Activated CD8-positive, alpha-beta T cell treated with anti-CD3 and anti-CD28 coated beads, Interleukin-2, amount 10 ng/mL, durations not matched to agents 7 days and 5 days (primary cell): ENCODE measurements at regions of chr22 and their contacts with region 1.

Region 1: DNA sequence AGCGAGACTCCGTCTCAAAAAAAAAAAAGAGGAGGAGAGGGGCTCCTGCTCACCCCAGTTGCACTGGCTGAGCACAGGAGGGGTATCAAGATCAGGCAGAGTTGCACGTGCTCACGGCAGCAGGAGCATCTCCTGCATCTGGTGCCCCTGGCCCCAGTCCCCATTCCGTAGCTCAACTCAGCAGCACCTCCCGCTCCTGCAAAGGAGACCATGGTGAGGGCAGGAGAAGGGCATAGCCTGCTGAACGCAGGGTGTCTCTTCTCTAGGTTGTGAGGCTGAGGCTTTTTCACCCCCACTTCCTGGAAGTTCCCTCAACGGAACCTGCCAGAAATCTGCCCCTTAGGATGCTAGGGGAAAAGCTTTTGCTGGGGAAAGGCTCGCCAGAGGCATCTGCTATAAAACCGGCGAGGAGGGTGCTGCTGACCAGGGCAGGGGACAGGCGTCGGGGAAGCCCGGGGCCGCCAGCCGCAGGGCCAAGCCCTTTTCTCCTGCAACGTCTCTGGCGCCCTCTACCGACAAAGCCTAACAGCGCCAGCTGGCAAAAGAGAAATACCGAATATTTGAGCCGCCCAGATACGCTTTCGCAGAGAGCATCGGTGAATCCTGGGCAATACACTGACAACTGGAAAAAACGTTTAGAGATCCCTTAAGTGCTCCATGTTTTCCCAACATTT is 1.0 kb upstream of the PPP6R2 start:
- DNase-seq: peak; percentile 93
- ATAC-seq: peak; percentile 59
- H3K4me3 Mint-ChIP-seq: peak overlapping the region; percentile 80
- H3K27ac Mint-ChIP-seq: peak overlapping the region; percentile 89
- H3K4me1 Mint-ChIP-seq: peaks cover 16% of the 10 kb centered on the region
- H3K27me3 Mint-ChIP-seq: no peaks in the 10 kb centered on the region

Region 2: GRCh38 chr22:50170453-50171318 is 171.4 kb before region 1 on chr22 and contains the start of gene PANX2:
- CTCF ChIA-PET with region 1: no interaction called
- POLR2A ChIA-PET with region 1: no interaction called
- DNase-seq: no peak
- ATAC-seq: peak; percentile 16
- H3K4me3 Mint-ChIP-seq: peak within 1 kb of the TSS; percentile 66
- H3K27ac Mint-ChIP-seq: no peak within 1 kb of the TSS
- H3K4me1 Mint-ChIP-seq: peaks cover 4% of the 10 kb centered on the region
- H3K27me3 Mint-ChIP-seq: peaks cover 33% of the 10 kb centered on the region
- total RNA-seq, gene PANX2: 0.10 TPM in 1 of 2 experiments, not detected in the other

Region 3: DNA sequence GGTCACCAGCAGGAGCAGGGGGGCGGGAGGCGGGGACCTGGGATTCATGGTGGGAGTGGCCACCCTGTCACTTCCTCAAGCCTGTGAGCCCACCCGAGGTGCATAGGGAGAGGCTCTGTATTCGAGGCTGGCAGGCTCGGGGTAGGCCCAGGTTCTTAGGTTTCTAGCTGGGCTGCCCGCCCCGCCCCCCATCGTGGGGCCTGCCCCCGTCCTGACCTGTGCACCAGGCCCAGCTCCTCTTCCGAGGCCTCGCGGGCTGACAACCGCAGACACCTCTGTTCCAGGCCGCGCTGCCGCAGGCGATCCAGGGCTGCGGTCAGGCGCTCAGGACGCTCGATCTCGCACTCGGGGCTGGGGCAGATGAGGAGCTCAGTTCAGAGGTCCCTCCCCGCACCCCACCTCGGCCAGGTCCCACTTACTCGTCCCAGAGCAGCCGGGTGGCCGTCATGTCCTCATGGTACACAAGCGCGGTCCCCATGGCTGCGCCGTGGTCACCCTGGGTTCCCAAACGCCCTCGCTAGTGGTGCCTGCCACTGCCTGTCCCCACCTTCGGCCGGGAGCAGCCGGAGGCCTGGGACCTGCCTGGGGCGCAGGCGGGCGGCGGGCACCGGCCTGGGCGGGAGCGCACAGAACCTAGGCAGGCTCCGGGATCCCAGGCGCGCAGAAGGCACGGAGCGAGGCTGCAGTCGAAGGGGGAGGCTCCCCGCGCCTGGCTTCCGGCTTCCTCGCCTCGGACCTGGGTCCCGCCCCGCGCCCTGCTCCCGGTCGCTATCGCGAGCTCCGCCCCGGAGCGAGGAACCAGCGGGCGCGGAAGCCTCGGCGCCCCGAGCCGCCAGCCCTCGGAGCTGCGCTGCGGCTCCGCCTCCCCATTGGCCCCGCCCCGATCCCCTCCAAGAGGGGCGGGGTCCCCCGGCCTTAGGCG is 91.3 kb before region 1 on chr22 and contains the start of gene HDAC10:
- CTCF ChIA-PET with region 1: interaction called, 27 read pairs
- POLR2A ChIA-PET with region 1: no interaction called
- DNase-seq: peak; percentile 91
- ATAC-seq: peak; percentile 88
- H3K4me3 Mint-ChIP-seq: peak within 1 kb of the TSS; percentile 84
- H3K27ac Mint-ChIP-seq: peak within 1 kb of the TSS; percentile 84
- H3K4me1 Mint-ChIP-seq: peaks cover 26% of the 10 kb centered on the region
- H3K27me3 Mint-ChIP-seq: no peaks in the 10 kb centered on the region
- total RNA-seq, gene HDAC10: 71.4 to 75.9 TPM

Region 4: GRCh38 chr22:50276143-50276542 is 66.0 kb before region 1 on chr22:
- CTCF ChIA-PET with region 1: interaction called, 17 read pairs
- POLR2A ChIA-PET with region 1: interaction called, 4 read pairs
- DNase-seq: peak; percentile 63
- ATAC-seq: peak; percentile 59
- H3K4me3 Mint-ChIP-seq: no peak overlapping the region
- H3K27ac Mint-ChIP-seq: no peak overlapping the region
- H3K4me1 Mint-ChIP-seq: peaks cover 9% of the 10 kb centered on the region
- H3K27me3 Mint-ChIP-seq: peaks cover 8% of the 10 kb centered on the region

Region 5: DNA sequence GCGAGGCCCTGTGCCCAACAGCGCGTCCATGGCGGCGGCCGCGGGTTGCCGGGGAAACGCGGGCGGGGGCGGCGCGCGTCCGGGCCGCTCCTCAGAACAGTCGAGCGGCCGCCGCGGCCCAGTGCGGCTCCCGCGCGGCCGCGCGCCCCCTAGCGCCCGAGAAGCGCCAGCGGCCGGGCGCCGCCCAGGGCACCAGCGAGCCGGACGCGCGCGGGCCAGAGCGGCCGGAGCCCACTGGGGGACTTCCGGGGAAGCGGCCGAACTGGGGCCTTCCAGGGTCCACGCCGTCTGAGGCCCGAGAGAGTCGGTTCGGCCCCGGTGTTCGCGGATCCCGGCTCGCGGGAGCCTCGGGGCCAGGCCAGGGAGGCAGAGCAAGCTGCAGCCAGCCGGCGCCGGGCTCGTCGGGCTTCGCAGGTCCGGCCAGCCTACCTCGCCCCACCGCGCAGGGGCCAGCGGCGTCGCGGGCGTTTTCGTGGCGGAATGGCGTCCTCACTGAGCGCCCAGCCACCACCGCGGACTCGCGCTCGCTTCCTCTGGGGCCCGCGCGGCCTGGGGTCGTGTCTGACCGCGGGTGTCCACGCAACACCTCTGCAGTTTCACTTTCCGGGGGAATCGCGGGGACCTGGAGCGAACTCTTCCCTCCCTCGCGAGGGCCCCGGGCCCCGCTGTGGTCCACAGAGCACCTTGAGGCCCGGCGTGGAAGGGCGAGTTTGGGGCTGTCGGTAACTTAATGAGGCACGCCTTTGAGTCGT is 15.0 kb before region 1 on chr22 and contains the start of gene DENND6B:
- CTCF ChIA-PET with region 1: interaction called, 35 read pairs
- POLR2A ChIA-PET with region 1: interaction called, 6 read pairs
- DNase-seq: peak; percentile 73
- ATAC-seq: peak; percentile 97
- H3K4me3 Mint-ChIP-seq: peak within 1 kb of the TSS; percentile 78
- H3K27ac Mint-ChIP-seq: peak within 1 kb of the TSS; percentile 87
- H3K4me1 Mint-ChIP-seq: peaks cover 15% of the 10 kb centered on the region
- H3K27me3 Mint-ChIP-seq: peaks cover 26% of the 10 kb centered on the region
- total RNA-seq, gene DENND6B: 6.0 to 7.0 TPM

Region 6: GRCh38 chr22:50361688-50362087 is 19.6 kb after region 1 on chr22:
- CTCF ChIA-PET with region 1: interaction called, 20 read pairs
- POLR2A ChIA-PET with region 1: interaction called, 6 read pairs
- DNase-seq: peak; percentile 53
- ATAC-seq: peak; percentile 81
- H3K4me3 Mint-ChIP-seq: peak overlapping the region; percentile 29
- H3K27ac Mint-ChIP-seq: peak overlapping the region; percentile 78
- H3K4me1 Mint-ChIP-seq: peaks cover 51% of the 10 kb centered on the region
- H3K27me3 Mint-ChIP-seq: no peaks in the 10 kb centered on the region

Region 7: GRCh38 chr22:50367778-50368500 is 25.8 kb after region 1 on chr22:
- CTCF ChIA-PET with region 1: interaction called, 20 read pairs
- POLR2A ChIA-PET with region 1: interaction called, 3 read pairs
- DNase-seq: no peak
- ATAC-seq: no peak
- H3K4me3 Mint-ChIP-seq: no peak overlapping the region
- H3K27ac Mint-ChIP-seq: no peak overlapping the region
- H3K4me1 Mint-ChIP-seq: peaks cover 11% of the 10 kb centered on the region
- H3K27me3 Mint-ChIP-seq: no peaks in the 10 kb centered on the region